ENCODE measurements at regions of chr11 and their contacts with region 1.

Region 1: GRCh38 chr11:64553551-64554201 is 37.3 kb upstream of the SLC22A12 start:
- DNase-seq: peak in 8 of 9 experiments; percentile 25 to 72 (median 60)
- ATAC-seq: peak; percentile 59
- H3K4me3 ChIP-seq: no peak overlapping the region
- H3K4me3 Mint-ChIP-seq: no peak overlapping the region
- H3K27ac ChIP-seq: no peak overlapping the region
- H3K27ac Mint-ChIP-seq: no peak overlapping the region
- H3K4me1 ChIP-seq: peaks cover 7% of the 10 kb centered on the region
- H3K4me1 Mint-ChIP-seq: peaks cover 11% of the 10 kb centered on the region
- H3K27me3 ChIP-seq: no peaks in the 10 kb centered on the region
- H3K27me3 Mint-ChIP-seq: peaks cover 5% of the 10 kb centered on the region
- CTCF ChIP-seq: peak; percentile 92

Region 2: DNA sequence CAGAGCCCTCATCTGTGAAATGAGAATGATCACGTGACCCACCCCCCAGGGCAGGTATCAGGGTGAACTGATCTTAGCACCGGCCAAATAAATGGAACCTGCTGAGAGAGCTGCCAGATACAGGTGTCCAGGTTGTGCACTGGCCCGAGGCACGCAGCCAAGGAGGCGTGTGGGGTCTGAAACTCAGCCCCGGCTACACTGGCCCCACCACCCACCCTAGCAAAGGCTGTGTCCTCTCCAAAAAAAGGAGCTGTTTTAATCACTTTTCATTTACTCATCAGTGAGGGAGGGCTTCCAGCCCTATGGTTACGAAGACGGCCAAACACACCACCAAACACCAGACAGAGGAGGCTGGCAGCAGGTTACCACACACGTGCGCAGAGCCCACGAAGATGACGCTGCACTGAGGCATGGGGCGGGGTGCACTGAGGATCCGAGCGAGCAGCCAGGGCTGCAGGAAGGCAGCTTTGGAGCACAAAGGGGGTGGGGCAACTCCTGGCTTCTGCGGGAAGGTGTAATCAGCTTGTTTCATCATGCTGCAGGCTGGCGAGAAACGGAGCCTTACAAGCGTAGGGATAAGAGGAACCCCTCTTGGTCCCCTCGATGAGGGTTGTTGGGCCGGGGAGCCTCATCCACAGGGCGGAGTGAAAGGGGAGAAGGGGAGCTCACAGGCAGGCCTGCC is 17.9 kb after region 1 on chr11:
- CTCF ChIA-PET with region 1: no interaction called
- POLR2A ChIA-PET with region 1: no interaction called
- intact Hi-C with region 1: no loop called
- DNase-seq: no peak
- ATAC-seq: no peak
- H3K4me3 ChIP-seq: no peak overlapping the region
- H3K4me3 Mint-ChIP-seq: no peak overlapping the region
- H3K27ac ChIP-seq: no peak overlapping the region
- H3K27ac Mint-ChIP-seq: no peak overlapping the region
- H3K4me1 ChIP-seq: no peaks in the 10 kb centered on the region
- H3K4me1 Mint-ChIP-seq: no peaks in the 10 kb centered on the region
- H3K27me3 ChIP-seq: no peaks in the 10 kb centered on the region
- H3K27me3 Mint-ChIP-seq: peaks cover 2% of the 10 kb centered on the region
- CTCF ChIP-seq: no peak

Region 3: DNA sequence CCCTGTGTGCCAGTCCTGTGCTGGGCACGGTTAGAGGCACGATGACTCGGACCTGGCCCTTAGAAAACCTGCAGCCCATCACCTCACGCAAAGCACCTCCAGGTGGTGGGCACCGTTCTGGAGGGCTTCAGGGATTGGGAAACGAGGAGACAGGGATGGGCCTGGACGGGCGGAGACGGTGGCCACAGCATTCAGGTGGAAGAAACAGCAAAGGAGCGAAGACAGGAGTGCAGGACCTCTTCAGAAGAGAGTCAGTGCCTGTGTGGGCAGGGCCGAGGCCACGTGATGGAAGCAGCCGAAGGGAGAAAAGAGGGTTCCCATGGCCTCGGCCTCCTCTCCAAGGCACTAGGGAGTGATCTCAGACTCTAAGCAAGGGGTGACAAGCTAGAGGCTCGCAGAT is 29.2 kb after region 1 on chr11:
- CTCF ChIA-PET with region 1: no interaction called
- POLR2A ChIA-PET with region 1: no interaction called
- intact Hi-C with region 1: no loop called
- DNase-seq: no peak
- ATAC-seq: no peak
- H3K4me3 ChIP-seq: no peak overlapping the region
- H3K4me3 Mint-ChIP-seq: no peak overlapping the region
- H3K27ac ChIP-seq: no peak overlapping the region
- H3K27ac Mint-ChIP-seq: no peak overlapping the region
- H3K4me1 ChIP-seq: no peaks in the 10 kb centered on the region
- H3K4me1 Mint-ChIP-seq: no peaks in the 10 kb centered on the region
- H3K27me3 ChIP-seq: no peaks in the 10 kb centered on the region
- H3K27me3 Mint-ChIP-seq: peaks cover 14% of the 10 kb centered on the region
- CTCF ChIP-seq: no peak

Region 4: DNA sequence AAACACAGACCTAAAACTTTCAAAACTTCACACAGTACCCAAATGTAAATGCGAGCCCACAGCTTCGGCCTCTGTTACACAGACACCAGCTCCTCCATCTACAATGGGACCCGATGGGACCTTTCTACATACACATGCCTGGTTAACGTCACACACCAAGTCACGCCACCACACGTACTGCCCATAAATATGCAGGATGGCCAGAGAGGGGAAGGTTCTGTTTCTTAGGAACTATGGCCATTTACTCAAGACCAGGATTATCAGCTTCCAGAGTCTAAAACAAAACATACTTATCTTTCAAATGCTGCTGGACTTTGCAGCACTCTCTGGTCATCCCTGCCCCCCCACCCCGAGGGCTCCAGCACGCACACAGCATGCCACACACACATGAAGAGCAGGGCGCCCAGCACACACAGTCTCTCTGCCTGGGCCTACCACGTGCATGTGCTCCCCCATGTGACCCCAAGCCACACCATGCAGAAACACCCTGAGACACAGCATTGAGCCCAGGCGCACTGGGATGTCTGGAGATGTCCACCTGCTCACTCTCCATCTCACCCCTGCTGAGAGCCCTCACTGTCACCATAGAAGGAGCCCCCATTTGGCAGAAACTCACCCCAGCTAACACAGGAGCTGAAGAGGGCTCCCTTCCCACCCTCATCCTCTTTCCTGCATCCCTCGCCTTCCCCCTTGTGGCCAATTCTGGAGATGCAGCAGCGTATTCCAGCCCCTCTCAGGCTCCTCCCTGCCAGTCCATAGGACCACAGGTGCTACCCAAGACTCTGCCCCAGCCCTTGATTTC is 99.1 kb after region 1 on chr11:
- CTCF ChIA-PET with region 1: interaction called, 3 read pairs
- POLR2A ChIA-PET with region 1: no interaction called
- intact Hi-C with region 1: loop called in 1 of 2 experiments (anchors 1 kb)
- DNase-seq: peak; percentile 43 to 79 (median 71)
- ATAC-seq: peak; percentile 93
- H3K4me3 ChIP-seq: no peak overlapping the region
- H3K4me3 Mint-ChIP-seq: no peak overlapping the region
- H3K27ac ChIP-seq: no peak overlapping the region
- H3K27ac Mint-ChIP-seq: no peak overlapping the region
- H3K4me1 ChIP-seq: no peaks in the 10 kb centered on the region
- H3K4me1 Mint-ChIP-seq: no peaks in the 10 kb centered on the region
- H3K27me3 ChIP-seq: no peaks in the 10 kb centered on the region
- H3K27me3 Mint-ChIP-seq: peaks cover 9% of the 10 kb centered on the region
- CTCF ChIP-seq: peak; percentile 59

Region 5: GRCh38 chr11:64723117-64723906 is 169.6 kb after region 1 on chr11 and contains the start of gene NRXN2:
- CTCF ChIA-PET with region 1: no interaction called
- POLR2A ChIA-PET with region 1: no interaction called
- intact Hi-C with region 1: loop called in 1 of 2 experiments (anchors 1 kb)
- DNase-seq: peak; percentile 62 to 94 (median 83)
- ATAC-seq: peak; percentile 94
- H3K4me3 ChIP-seq: peak within 1 kb of the TSS; percentile 71 to 78
- H3K4me3 Mint-ChIP-seq: peak within 1 kb of the TSS; percentile 70
- H3K27ac ChIP-seq: peak within 1 kb of the TSS; percentile 49 to 71
- H3K27ac Mint-ChIP-seq: no peak within 1 kb of the TSS
- H3K4me1 ChIP-seq: peaks cover 21% of the 10 kb centered on the region
- H3K4me1 Mint-ChIP-seq: peaks cover 18% of the 10 kb centered on the region
- H3K27me3 ChIP-seq: peaks cover 0 to 7% of the 10 kb centered on the region in 2 experiments
- H3K27me3 Mint-ChIP-seq: peaks cover 9% of the 10 kb centered on the region
- CTCF ChIP-seq: peak; percentile 97
- total RNA-seq, gene NRXN2: 0.17 to 0.43 TPM

Measured in CD8-positive, alpha-beta T cell (primary cell).